CD8-positive, alpha-beta T cell (primary cell): ENCODE measurements at regions of chr14 and their contacts with region 1.

Region 1: GRCh38 chr14:99930420-99931274 is 134.6 kb upstream of the EVL start:
- DNase-seq: no peak
- ATAC-seq: no peak
- H3K4me3 ChIP-seq: no peak overlapping the region
- H3K4me3 Mint-ChIP-seq: no peak overlapping the region
- H3K27ac ChIP-seq: no peak overlapping the region
- H3K27ac Mint-ChIP-seq: no peak overlapping the region
- H3K4me1 ChIP-seq: no peaks in the 10 kb centered on the region
- H3K4me1 Mint-ChIP-seq: no peaks in the 10 kb centered on the region
- H3K27me3 ChIP-seq: no peaks in the 10 kb centered on the region
- H3K27me3 Mint-ChIP-seq: peaks cover 17% of the 10 kb centered on the region
- CTCF ChIP-seq: no peak

Region 2: DNA sequence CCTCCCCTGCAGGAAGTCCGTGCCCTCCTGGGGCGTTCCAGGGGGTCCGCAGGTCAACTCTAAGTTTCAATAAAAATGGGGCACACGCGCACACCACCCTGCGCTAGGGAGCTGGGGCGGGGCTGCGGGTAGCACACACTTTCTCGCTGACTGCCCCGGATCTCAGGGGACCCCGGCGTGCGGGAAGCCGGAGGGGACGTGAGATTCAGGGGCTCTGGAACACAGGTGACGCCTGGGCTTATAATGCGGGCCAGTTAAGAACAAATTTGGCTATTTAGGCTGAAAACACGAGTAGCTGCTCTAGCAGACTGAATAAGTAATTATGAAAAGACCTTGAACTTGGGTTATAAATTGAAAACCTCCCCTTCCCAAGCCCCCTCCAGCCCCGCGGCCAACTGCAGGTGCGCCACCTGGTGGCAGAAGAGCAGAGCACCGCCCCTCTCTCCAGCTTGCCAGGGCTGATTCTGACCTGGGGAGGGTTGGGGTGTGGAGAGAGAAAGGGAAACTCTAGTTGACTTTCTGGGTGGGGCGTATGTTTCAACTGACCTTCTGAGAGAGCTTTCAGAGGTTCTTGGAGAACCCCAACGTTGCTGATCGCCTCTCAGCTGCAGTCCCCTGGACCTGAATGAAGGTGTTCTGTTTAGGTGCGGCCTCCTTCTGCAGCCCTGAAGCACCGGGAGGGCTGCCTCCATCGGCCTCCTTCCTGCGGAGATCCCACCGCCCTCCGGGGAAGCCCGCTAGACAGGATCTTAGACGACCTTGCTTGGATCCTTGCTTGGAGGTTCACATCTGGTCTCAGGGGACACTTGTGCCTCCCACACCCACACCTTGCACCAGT is 16.2 kb after region 1 on chr14:
- CTCF ChIA-PET with region 1: interaction called, 11 read pairs
- POLR2A ChIA-PET with region 1: no interaction called
- intact Hi-C with region 1: no loop called
- DNase-seq: peak; percentile 20 to 74 (median 59)
- ATAC-seq: peak; percentile 73
- H3K4me3 ChIP-seq: peak overlapping the region; percentile 34 to 44
- H3K4me3 Mint-ChIP-seq: peak overlapping the region; percentile 76
- H3K27ac ChIP-seq: no peak overlapping the region
- H3K27ac Mint-ChIP-seq: no peak overlapping the region
- H3K4me1 ChIP-seq: peaks cover 15% of the 10 kb centered on the region
- H3K4me1 Mint-ChIP-seq: peaks cover 8% of the 10 kb centered on the region
- H3K27me3 ChIP-seq: peaks cover 0 to 19% of the 10 kb centered on the region in 2 experiments
- H3K27me3 Mint-ChIP-seq: peaks cover 12% of the 10 kb centered on the region
- CTCF ChIP-seq: peak; percentile 99